Naive thymus-derived CD4-positive, alpha-beta T cell (primary cell): ENCODE measurements at regions of chrX and their contacts with region 1.

Region 1: GRCh38 chrX:51420610-51421009 is 75.8 kb downstream of the NUDT11 start:
- DNase-seq: peak in 7 of 9 donors; percentile 12 to 61 (median 50)
- ATAC-seq: peak; percentile 57
- H3K4me3 ChIP-seq: no peak overlapping the region
- H3K4me3 Mint-ChIP-seq: no peak overlapping the region
- H3K27ac ChIP-seq: no peak overlapping the region
- H3K27ac Mint-ChIP-seq: no peak overlapping the region
- H3K4me1 ChIP-seq: no peaks in the 10 kb centered on the region
- H3K4me1 Mint-ChIP-seq: peaks cover 0 to 5% (median 0%) of the 10 kb centered on the region in 7 donors
- H3K27me3 ChIP-seq: no peaks in the 10 kb centered on the region
- H3K27me3 Mint-ChIP-seq: no peaks in the 10 kb centered on the region

Region 2: GRCh38 chrX:51144852-51145442 is 275.7 kb before region 1 on chrX:
- CTCF ChIA-PET with region 1: no interaction called
- POLR2A ChIA-PET with region 1: no interaction called
- intact Hi-C with region 1: loop called in 1 of 2 experiments (anchors 2 kb)
- DNase-seq: peak in 6 of 9 donors; percentile 7 to 36 (median 29)
- ATAC-seq: no peak
- H3K4me3 ChIP-seq: no peak overlapping the region
- H3K4me3 Mint-ChIP-seq: no peak overlapping the region
- H3K27ac ChIP-seq: no peak overlapping the region
- H3K27ac Mint-ChIP-seq: no peak overlapping the region
- H3K4me1 ChIP-seq: no peaks in the 10 kb centered on the region
- H3K4me1 Mint-ChIP-seq: no peaks in the 10 kb centered on the region
- H3K27me3 ChIP-seq: no peaks in the 10 kb centered on the region
- H3K27me3 Mint-ChIP-seq: peaks cover 8 to 26% (median 13%) of the 10 kb centered on the region in 5 donors

Region 3: GRCh38 chrX:51336584-51336983 is 84.0 kb before region 1 on chrX:
- CTCF ChIA-PET with region 1: interaction called, 44 read pairs
- POLR2A ChIA-PET with region 1: no interaction called
- intact Hi-C with region 1: loop called (anchors 1 kb)
- DNase-seq: peak in 7 of 9 donors; percentile 22 to 52 (median 40)
- ATAC-seq: peak; percentile 88
- H3K4me3 ChIP-seq: no peak overlapping the region
- H3K4me3 Mint-ChIP-seq: no peak overlapping the region
- H3K27ac ChIP-seq: no peak overlapping the region
- H3K27ac Mint-ChIP-seq: no peak overlapping the region
- H3K4me1 ChIP-seq: no peaks in the 10 kb centered on the region
- H3K4me1 Mint-ChIP-seq: peaks cover 0 to 11% (median 2%) of the 10 kb centered on the region in 7 donors
- H3K27me3 ChIP-seq: no peaks in the 10 kb centered on the region
- H3K27me3 Mint-ChIP-seq: peaks cover 0 to 8% (median 0%) of the 10 kb centered on the region in 5 donors

Region 4: DNA sequence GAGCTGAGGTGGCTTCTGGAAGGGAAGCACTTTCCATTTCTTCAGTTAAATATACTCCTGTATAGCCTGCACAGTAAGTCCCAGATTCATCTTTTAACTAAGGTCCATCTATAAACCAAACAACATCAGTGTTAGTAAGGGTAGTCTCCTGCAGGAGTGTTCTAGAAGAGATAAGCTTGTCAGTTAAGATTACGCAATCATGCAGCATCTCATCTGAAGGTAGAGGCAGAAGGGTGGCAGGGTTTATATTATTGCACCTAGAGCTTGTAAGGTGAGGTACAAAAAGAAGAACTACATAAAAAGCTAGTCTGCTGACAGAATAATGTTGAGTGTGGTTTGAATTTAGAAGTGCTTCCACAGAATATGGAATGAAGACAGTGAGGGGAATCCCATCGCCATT is 43.9 kb before region 1 on chrX:
- CTCF ChIA-PET with region 1: no interaction called
- POLR2A ChIA-PET with region 1: no interaction called
- intact Hi-C with region 1: loop called in 1 of 2 experiments (anchors 5 kb)
- DNase-seq: no peak
- ATAC-seq: no peak
- H3K4me3 ChIP-seq: no peak overlapping the region
- H3K4me3 Mint-ChIP-seq: no peak overlapping the region
- H3K27ac ChIP-seq: no peak overlapping the region
- H3K27ac Mint-ChIP-seq: no peak overlapping the region
- H3K4me1 ChIP-seq: no peaks in the 10 kb centered on the region
- H3K4me1 Mint-ChIP-seq: peaks cover 0 to 26% (median 16%) of the 10 kb centered on the region in 7 donors
- H3K27me3 ChIP-seq: no peaks in the 10 kb centered on the region
- H3K27me3 Mint-ChIP-seq: no peaks in the 10 kb centered on the region

Region 5: GRCh38 chrX:51395810-51396728 is 24.5 kb before region 1 on chrX:
- CTCF ChIA-PET with region 1: interaction called, 6 read pairs
- POLR2A ChIA-PET with region 1: no interaction called
- intact Hi-C with region 1: loop called in 1 of 2 experiments (anchors 1 kb)
- DNase-seq: peak; percentile 24 to 80 (median 70)
- ATAC-seq: peak; percentile 94
- H3K4me3 ChIP-seq: peak overlapping the region; percentile 74
- H3K4me3 Mint-ChIP-seq: peak overlapping the region; percentile 89 to 98 (median 94)
- H3K27ac ChIP-seq: peak overlapping the region; percentile 73
- H3K27ac Mint-ChIP-seq: peak overlapping the region; percentile 89 to 99 (median 93)
- H3K4me1 ChIP-seq: no peaks in the 10 kb centered on the region
- H3K4me1 Mint-ChIP-seq: peaks cover 10 to 69% (median 61%) of the 10 kb centered on the region in 7 donors
- H3K27me3 ChIP-seq: no peaks in the 10 kb centered on the region
- H3K27me3 Mint-ChIP-seq: no peaks in the 10 kb centered on the region

Region 6: DNA sequence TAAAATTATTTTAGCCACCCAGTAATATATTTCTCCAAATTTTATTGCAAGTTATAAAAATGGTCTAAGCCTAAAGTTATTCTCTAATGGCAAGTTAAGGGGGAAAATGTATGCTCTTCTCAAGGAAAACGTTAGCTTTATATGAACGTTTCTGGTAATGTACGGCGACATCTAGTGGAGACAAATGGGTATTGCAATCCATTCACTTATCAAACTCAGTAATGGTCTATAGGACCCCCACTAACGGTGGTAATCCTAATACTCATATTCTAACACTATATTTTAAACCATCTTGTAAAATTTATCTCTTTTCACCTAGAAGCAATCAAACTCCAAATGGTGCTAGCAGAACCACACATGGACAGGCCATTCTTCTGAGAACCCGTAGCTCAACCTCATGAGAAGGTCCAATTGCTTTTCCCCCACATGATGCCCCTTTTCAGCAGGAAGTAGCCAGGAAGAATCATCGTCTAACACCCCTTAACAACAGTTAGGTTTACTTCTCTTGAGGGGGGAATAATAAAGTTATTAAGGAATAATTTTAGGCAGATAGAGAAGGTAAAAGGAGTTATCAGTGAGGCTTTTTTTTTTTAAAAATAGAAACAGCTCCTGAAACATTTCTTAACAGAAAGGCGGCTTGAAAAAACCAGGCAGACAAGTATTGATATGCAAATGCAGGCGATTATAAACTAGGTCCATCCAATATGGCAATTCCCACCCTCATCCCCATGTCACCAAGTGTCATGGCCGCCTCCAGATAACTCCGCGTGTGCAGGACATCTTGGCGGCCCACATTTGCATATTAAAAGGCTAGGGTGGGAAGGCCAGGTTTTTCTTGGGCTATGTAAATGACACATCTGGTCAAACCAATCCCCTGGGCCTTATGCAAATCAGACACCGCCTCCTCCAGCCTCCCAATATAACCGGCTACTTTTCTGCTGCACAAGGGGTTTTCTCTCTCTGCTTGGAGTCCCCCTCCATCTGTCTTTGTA is 40.7 kb after region 1 on chrX:
- CTCF ChIA-PET with region 1: interaction called, 3 read pairs
- POLR2A ChIA-PET with region 1: no interaction called
- intact Hi-C with region 1: loop called in 1 of 2 experiments (anchors 5 kb)
- DNase-seq: peak in 7 of 9 donors; percentile 16 to 49 (median 39)
- ATAC-seq: no peak
- H3K4me3 ChIP-seq: no peak overlapping the region
- H3K4me3 Mint-ChIP-seq: no peak overlapping the region
- H3K27ac ChIP-seq: no peak overlapping the region
- H3K27ac Mint-ChIP-seq: no peak overlapping the region
- H3K4me1 ChIP-seq: no peaks in the 10 kb centered on the region
- H3K4me1 Mint-ChIP-seq: no peaks in the 10 kb centered on the region
- H3K27me3 ChIP-seq: no peaks in the 10 kb centered on the region
- H3K27me3 Mint-ChIP-seq: no peaks in the 10 kb centered on the region

Region 7: DNA sequence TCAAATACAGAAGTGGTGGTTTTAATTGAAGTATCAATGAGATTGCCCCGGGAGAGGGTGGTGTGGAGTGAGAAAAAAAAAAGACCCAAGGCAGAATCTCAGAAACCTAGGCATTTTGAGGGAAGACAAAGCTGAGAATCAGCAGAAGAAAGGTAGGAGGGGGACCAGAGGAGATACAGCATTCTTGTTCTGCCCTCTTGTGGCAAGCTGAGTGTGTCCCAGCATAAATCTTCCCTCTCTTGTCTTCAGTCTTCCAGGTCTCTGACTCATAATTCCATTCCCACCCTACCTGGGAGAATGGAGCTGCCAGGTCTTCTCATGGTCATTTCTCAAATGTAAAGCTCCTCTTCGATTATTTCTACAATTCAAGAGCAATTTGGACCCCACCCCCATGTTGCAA is 440.1 kb after region 1 on chrX:
- CTCF ChIA-PET with region 1: no interaction called
- POLR2A ChIA-PET with region 1: no interaction called
- intact Hi-C with region 1: no loop called
- DNase-seq: peak in 3 of 9 donors; percentile 2 to 3 (median 2)
- ATAC-seq: no peak
- H3K4me3 ChIP-seq: no peak overlapping the region
- H3K4me3 Mint-ChIP-seq: no peak overlapping the region
- H3K27ac ChIP-seq: no peak overlapping the region
- H3K27ac Mint-ChIP-seq: peak overlapping the region in 1 of 9 donors; percentile 23
- H3K4me1 ChIP-seq: no peaks in the 10 kb centered on the region
- H3K4me1 Mint-ChIP-seq: peaks cover 5 to 26% (median 11%) of the 10 kb centered on the region in 7 donors
- H3K27me3 ChIP-seq: no peaks in the 10 kb centered on the region
- H3K27me3 Mint-ChIP-seq: no peaks in the 10 kb centered on the region